H1 (cell line): ENCODE measurements at regions of chr11 and their contacts with region 1.

Region 1: DNA sequence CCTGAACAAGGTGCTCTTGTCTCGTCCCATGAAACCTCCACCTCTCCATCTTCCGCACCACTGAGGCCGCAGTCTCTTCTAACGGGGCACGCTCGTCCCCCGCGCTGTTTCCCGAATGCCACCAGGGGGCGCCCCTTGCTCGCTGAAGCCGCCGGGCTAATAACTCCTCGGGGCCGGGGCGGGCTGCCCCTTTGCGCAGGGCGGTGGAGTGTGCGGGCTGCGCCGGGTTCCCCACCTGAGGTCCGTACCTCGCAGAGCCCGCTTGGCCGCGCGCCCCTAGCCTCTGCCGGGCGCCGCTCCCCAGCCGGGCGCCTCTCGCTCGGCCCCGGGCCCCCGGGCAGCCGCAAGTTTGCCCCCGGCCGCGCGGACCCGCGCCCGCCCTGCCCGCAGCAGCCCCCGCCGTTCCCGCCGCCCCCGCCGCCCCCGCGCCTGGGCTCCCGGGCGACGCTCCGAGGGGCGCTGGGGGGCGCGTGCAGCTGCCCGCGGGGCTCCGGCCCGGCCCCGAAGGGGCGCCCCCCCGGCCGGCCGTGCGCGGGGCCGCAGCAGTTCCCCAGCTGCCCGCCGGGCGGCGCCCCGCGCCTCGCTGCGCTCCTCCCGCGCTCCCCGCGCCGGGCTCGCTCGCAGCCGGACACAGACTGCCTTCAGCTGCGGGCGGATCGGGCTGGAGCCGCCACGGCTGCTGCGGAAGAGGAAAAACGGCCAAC is at the start of gene GRIK4:
- DNase-seq: peak; percentile 63 to 97
- H3K4me3 ChIP-seq: peak within 1 kb of the TSS; percentile 41 to 65 (median 48)
- H3K27ac ChIP-seq: no peak within 1 kb of the TSS
- H3K4me1 ChIP-seq: peaks cover 0 to 5% (median 2%) of the 10 kb centered on the region in 4 experiments; a peak in 3 of 7 replicates
- H3K27me3 ChIP-seq: peaks cover 0 to 22% (median 12%) of the 10 kb centered on the region in 4 experiments; a peak in 5 of 7 replicates
- CTCF ChIP-seq: peak; percentile 84 to 97 (median 89)
- EP300 ChIP-seq: no peak
- POLR2A ChIP-seq: no peak
- RAD21 ChIP-seq: peak; percentile 99
- total RNA-seq, gene GRIK4: 2.4 and 2.9 TPM in 2 replicates

Region 2: DNA sequence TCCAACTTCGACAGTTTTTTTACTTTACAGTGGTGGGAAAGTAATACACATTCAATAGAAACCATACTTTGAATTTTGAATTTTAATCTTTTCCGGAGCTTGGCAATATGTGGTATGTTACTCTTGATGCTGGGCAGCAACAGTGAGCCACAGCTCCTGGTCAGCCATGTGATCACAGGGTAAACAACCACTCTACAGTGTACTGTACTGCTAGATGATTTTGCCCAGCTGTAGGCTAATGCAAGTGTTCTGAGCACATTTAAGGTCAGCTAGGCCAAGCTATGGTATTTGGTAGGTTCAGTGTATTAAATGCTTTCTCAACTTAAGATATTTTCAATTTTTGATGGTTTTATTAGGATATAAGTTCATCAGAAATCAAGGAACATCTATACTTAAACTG is 48.4 kb before region 1 on chr11:
- CTCF ChIA-PET with region 1: no interaction called
- POLR2A ChIA-PET with region 1: no interaction called
- DNase-seq: no peak
- H3K4me3 ChIP-seq: no peak overlapping the region
- H3K27ac ChIP-seq: no peak overlapping the region
- H3K4me1 ChIP-seq: no peaks in the 10 kb centered on the region
- H3K27me3 ChIP-seq: no peaks in the 10 kb centered on the region
- CTCF ChIP-seq: no peak
- EP300 ChIP-seq: no peak
- POLR2A ChIP-seq: no peak
- RAD21 ChIP-seq: no peak

Region 3: DNA sequence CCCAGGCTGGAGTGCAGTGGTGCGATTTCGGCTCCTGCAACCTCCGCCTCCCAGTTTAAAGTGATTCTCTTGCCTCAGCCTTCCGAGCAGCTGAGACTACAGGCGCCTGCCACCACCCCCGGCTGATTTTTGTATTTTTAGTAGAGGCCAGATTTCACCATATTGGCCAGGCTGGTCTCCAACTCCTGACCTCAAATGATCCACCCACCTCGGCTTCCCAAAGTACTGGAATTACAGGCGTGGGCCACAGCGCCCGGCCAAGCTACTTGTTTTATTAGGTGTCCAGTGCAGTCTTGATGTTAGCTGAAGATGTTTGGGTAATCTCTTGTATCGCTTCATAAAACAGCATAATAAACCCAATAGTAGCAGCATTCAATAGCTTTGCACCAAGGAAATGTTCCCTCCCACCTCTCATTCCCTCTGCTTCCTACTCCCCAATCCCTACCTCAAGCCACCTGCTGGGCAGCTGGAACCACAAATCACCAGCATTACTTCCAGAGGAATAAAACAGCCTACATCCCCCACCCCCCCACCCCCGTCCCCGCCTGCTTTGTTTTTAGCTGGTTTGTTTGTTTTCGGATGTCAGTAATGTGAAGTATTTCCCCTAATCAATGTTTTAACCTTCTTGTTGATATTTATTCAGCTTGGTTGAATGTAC is 10.7 kb before region 1 on chr11:
- CTCF ChIA-PET with region 1: interaction called, 30 read pairs
- POLR2A ChIA-PET with region 1: no interaction called
- DNase-seq: peak in 1 of 2 experiments; percentile 51
- H3K4me3 ChIP-seq: peak overlapping the region in 1 of 4 experiments; percentile 30; a peak in 1 of 8 replicates
- H3K27ac ChIP-seq: no peak overlapping the region
- H3K4me1 ChIP-seq: peaks cover 4 to 24% (median 16%) of the 10 kb centered on the region in 4 experiments; a peak in 5 of 7 replicates
- H3K27me3 ChIP-seq: no peaks in the 10 kb centered on the region
- CTCF ChIP-seq: no peak
- EP300 ChIP-seq: no peak
- POLR2A ChIP-seq: no peak
- RAD21 ChIP-seq: no peak

Region 4: GRCh38 chr11:120539667-120540369 is 28.6 kb after region 1 on chr11:
- CTCF ChIA-PET with region 1: interaction called, 17 read pairs
- POLR2A ChIA-PET with region 1: no interaction called
- DNase-seq: no peak
- H3K4me3 ChIP-seq: no peak overlapping the region
- H3K27ac ChIP-seq: no peak overlapping the region
- H3K4me1 ChIP-seq: no peaks in the 10 kb centered on the region; a peak in 1 of 7 replicates
- H3K27me3 ChIP-seq: no peaks in the 10 kb centered on the region
- CTCF ChIP-seq: no peak
- EP300 ChIP-seq: no peak
- POLR2A ChIP-seq: no peak
- RAD21 ChIP-seq: no peak

Region 5: DNA sequence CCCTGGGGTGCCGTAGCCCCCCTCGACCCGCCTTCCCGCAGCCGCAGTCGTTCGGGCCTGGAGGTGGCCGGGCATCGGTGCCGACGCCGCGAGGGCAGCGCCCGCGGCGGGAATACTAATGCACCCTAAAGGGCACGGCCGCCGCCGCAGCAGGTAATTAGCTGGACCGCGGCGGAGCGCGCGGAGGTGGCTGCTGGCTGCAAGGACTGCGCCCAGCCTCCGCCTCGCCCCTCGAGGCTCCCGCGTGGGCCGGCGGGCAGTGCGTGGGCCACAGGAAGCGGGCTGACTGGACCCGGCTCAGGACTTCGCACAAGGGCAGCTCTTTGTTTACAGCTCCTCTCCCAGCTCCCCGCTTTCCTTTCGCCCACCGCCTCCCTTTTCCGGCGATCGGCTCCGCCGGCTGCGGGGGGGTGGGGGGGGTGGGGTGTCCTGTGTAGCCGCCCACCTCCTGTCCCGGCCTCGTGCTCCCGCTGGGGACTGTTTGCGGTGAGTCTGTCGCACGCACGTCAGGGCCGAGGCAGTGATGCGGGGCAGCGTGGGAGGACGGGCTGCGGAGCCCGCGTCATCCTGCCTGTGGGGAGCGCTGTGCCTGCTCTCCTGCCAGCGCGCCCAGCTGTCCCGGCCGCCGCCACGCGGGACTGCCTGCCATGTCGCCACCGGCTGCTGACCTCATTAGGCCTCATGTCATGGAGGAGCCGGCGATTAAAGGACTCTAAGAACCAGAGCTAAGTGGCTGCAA is 53.5 kb after region 1 on chr11:
- CTCF ChIA-PET with region 1: interaction called, 13 read pairs
- POLR2A ChIA-PET with region 1: no interaction called
- DNase-seq: no peak
- H3K4me3 ChIP-seq: peak overlapping the region; percentile 48 to 66 (median 58)
- H3K27ac ChIP-seq: no peak overlapping the region
- H3K4me1 ChIP-seq: peaks cover 10 to 28% (median 13%) of the 10 kb centered on the region in 4 experiments
- H3K27me3 ChIP-seq: peaks cover 0 to 38% (median 27%) of the 10 kb centered on the region in 4 experiments; a peak in 6 of 7 replicates
- CTCF ChIP-seq: peak in 2 of 3 experiments; percentile 18 to 42; a peak in 1 of 4 replicates
- EP300 ChIP-seq: no peak
- POLR2A ChIP-seq: peak in 1 of 2 experiments; percentile 33; a peak in 1 of 3 replicates
- RAD21 ChIP-seq: peak in 1 of 2 experiments; percentile 27; a peak in 3 of 4 replicates

Region 6: GRCh38 chr11:120645639-120646038 is 134.4 kb after region 1 on chr11:
- CTCF ChIA-PET with region 1: interaction called, 10 read pairs
- POLR2A ChIA-PET with region 1: interaction called, 5 read pairs
- DNase-seq: peak; percentile 86 to 90
- H3K4me3 ChIP-seq: peak overlapping the region in 2 of 4 experiments; percentile 1 to 24; a peak in 1 of 8 replicates
- H3K27ac ChIP-seq: no peak overlapping the region
- H3K4me1 ChIP-seq: peaks cover 7 to 20% (median 11%) of the 10 kb centered on the region in 4 experiments
- H3K27me3 ChIP-seq: peaks cover 52 to 92% (median 82%) of the 10 kb centered on the region in 4 experiments
- CTCF ChIP-seq: no peak
- EP300 ChIP-seq: peak in 1 of 2 experiments; percentile 94; a peak in 2 of 3 replicates
- POLR2A ChIP-seq: no peak
- RAD21 ChIP-seq: peak in 1 of 2 experiments; percentile 26; a peak in 2 of 4 replicates

Region 7: DNA sequence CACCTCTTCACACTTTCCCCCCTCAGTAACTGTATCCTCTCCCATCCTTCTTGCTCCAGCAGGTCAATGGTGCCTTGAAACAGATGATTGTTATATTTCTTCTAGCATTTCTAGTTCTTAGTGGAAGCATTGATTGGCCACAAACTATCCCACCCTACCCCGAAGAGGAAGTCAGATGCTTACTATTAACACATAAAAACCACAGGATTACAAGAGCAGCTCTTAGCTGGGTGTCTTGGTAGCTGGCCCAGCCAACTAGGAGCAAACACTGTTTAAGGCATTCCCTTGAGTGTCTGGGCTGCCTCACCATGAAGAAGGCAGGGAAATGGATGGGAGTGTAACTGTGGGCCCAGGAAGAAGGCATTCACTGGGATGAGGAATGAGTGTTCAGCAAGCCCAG is 176.9 kb after region 1 on chr11:
- CTCF ChIA-PET with region 1: interaction called, 27 read pairs
- POLR2A ChIA-PET with region 1: no interaction called
- DNase-seq: no peak
- H3K4me3 ChIP-seq: no peak overlapping the region
- H3K27ac ChIP-seq: no peak overlapping the region
- H3K4me1 ChIP-seq: no peaks in the 10 kb centered on the region
- H3K27me3 ChIP-seq: no peaks in the 10 kb centered on the region
- CTCF ChIP-seq: no peak
- EP300 ChIP-seq: no peak
- POLR2A ChIP-seq: no peak
- RAD21 ChIP-seq: no peak

Region 8: DNA sequence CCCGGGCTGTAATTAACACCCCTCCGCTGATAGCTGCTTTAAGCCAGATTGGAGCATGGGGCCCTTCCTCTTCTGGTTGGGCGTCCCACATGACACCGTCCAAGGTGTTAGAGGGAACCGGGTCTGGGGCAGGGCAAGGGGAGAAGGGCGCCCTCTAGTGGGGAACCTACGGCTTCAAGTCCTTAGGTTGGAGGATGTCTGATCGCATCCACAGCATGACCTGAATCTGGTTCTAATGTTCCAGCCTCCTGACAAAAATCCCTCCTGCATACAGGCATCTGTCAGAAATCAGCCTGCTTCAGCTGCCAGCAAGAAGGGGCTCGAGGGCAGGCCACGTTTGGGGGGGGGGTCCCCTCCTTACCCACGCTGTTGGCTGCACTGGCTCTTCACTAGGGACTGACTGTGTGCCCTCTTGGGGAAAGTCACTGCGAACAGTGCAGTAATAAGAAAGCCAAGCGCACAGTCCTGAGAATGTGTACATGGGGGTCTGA is 418.4 kb after region 1 on chr11:
- CTCF ChIA-PET with region 1: interaction called, 16 read pairs
- POLR2A ChIA-PET with region 1: no interaction called
- DNase-seq: peak; percentile 73 to 88
- H3K4me3 ChIP-seq: no peak overlapping the region
- H3K27ac ChIP-seq: no peak overlapping the region
- H3K4me1 ChIP-seq: peaks cover 0 to 8% (median 0%) of the 10 kb centered on the region in 4 experiments; a peak in 3 of 7 replicates
- H3K27me3 ChIP-seq: peaks cover 0 to 3% (median 0%) of the 10 kb centered on the region in 4 experiments; a peak in 1 of 7 replicates
- CTCF ChIP-seq: peak; percentile 92 to 93 (median 93)
- EP300 ChIP-seq: no peak
- POLR2A ChIP-seq: no peak
- RAD21 ChIP-seq: peak; percentile 86 to 90